Activated CD4-positive, alpha-beta T cell treated with anti-CD3 and anti-CD28 coated beads for 36 hours (primary cell): ENCODE measurements at regions of chr1 and their contacts with region 1.

Region 1: DNA sequence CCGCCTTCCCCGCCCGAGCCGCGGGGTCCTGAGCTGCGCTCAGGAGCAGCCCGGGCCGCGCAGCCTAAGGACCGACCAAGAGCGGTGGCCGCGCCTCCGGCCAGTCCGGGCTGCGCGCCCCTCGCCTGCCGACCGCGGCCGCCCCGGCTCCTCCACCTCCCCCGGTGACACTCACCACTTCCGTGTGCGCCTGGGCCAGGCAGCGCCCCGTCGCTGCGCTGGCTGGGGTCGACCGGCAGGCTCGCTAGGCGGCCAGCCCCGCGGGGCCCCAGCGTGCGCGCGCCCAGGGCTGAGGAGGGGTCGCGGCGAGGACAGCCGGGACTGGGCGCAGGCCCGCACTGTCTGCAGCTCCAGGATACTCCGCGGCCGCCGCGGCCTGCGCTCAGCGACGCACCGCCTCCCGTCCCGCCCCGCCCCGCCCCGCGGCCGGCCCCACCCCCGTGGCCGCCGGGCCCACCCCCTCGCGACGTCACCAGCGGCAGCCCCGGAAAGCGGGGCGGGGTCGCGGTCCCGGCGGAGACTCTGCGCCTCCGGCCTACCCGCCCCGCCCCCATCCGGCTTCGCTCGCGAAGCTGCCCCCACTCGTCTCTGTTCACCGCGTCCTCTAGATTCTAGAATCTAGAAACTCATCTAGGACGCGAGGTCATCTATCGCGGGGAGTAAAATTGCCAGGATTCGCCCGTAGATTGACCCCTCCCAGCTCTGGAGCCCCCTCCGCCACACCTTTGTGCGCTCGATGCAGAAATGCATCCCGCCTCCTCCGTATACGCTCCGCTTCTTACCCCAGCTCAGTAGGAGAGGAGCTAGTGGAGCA is at the start of gene JAK1:
- DNase-seq: peak; percentile 95
- ATAC-seq: peak; percentile 64
- H3K4me3 Mint-ChIP-seq: peak within 1 kb of the TSS; percentile 83
- H3K27ac Mint-ChIP-seq: peak within 1 kb of the TSS; percentile 90
- H3K4me1 Mint-ChIP-seq: peaks cover 50% of the 10 kb centered on the region
- H3K27me3 Mint-ChIP-seq: no peaks in the 10 kb centered on the region
- total RNA-seq, gene JAK1: 100 to 114 TPM

Region 2: GRCh38 chr1:64744492-64745180 is 221.7 kb before region 1 on chr1 and contains the start of gene RAVER2:
- CTCF ChIA-PET with region 1: no interaction called
- POLR2A ChIA-PET with region 1: no interaction called
- intact Hi-C with region 1: loop called in 1 of 2 experiments (anchors 10 kb)
- DNase-seq: peak; percentile 72
- ATAC-seq: peak; percentile 79
- H3K4me3 Mint-ChIP-seq: peak within 1 kb of the TSS; percentile 76
- H3K27ac Mint-ChIP-seq: peak within 1 kb of the TSS; percentile 70
- H3K4me1 Mint-ChIP-seq: peaks cover 17% of the 10 kb centered on the region
- H3K27me3 Mint-ChIP-seq: peaks cover 5% of the 10 kb centered on the region
- total RNA-seq, gene RAVER2: 3.2 to 3.6 TPM

Region 3: GRCh38 chr1:64948905-64949833 is 17.2 kb before region 1 on chr1:
- CTCF ChIA-PET with region 1: interaction called, 3 read pairs
- POLR2A ChIA-PET with region 1: interaction called, 4 read pairs
- intact Hi-C with region 1: loop called in 1 of 2 experiments (anchors 1 kb)
- DNase-seq: peak; percentile 71
- ATAC-seq: peak; percentile 87
- H3K4me3 Mint-ChIP-seq: peak overlapping the region; percentile 29
- H3K27ac Mint-ChIP-seq: peak overlapping the region; percentile 86
- H3K4me1 Mint-ChIP-seq: peaks cover 80% of the 10 kb centered on the region
- H3K27me3 Mint-ChIP-seq: no peaks in the 10 kb centered on the region

Region 4: DNA sequence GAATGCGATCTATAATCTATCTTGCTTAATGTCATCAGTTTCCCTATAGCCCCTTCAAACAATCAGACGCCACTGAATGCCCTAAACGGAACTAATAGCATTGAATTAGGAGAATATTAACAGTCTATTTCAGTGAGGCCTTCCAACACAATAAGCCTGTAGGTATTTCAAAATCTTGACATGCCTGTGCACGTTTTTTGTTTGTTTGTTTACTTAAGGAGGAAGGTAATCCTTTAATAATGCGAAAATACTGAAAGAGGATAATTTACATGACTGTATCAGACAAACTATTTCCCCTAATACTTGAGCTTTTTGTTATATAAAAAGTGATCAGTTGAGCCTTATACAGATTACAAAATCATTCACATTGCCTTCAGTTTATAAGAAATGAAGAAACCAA is 29.0 kb after region 1 on chr1:
- CTCF ChIA-PET with region 1: no interaction called
- POLR2A ChIA-PET with region 1: no interaction called
- intact Hi-C with region 1: no loop called
- DNase-seq: no peak
- ATAC-seq: no peak
- H3K4me3 Mint-ChIP-seq: no peak overlapping the region
- H3K27ac Mint-ChIP-seq: no peak overlapping the region
- H3K4me1 Mint-ChIP-seq: peaks cover 4% of the 10 kb centered on the region
- H3K27me3 Mint-ChIP-seq: no peaks in the 10 kb centered on the region

Region 5: GRCh38 chr1:65067491-65068201 is 101.3 kb after region 1 on chr1:
- CTCF ChIA-PET with region 1: interaction called, 5 read pairs
- POLR2A ChIA-PET with region 1: interaction called, 4 read pairs
- intact Hi-C with region 1: loop called (anchors 1 to 2 kb)
- DNase-seq: peak; percentile 70
- ATAC-seq: peak; percentile 27
- H3K4me3 Mint-ChIP-seq: peak overlapping the region; percentile 93
- H3K27ac Mint-ChIP-seq: peak overlapping the region; percentile 95
- H3K4me1 Mint-ChIP-seq: peaks cover 52% of the 10 kb centered on the region
- H3K27me3 Mint-ChIP-seq: no peaks in the 10 kb centered on the region

Region 6: DNA sequence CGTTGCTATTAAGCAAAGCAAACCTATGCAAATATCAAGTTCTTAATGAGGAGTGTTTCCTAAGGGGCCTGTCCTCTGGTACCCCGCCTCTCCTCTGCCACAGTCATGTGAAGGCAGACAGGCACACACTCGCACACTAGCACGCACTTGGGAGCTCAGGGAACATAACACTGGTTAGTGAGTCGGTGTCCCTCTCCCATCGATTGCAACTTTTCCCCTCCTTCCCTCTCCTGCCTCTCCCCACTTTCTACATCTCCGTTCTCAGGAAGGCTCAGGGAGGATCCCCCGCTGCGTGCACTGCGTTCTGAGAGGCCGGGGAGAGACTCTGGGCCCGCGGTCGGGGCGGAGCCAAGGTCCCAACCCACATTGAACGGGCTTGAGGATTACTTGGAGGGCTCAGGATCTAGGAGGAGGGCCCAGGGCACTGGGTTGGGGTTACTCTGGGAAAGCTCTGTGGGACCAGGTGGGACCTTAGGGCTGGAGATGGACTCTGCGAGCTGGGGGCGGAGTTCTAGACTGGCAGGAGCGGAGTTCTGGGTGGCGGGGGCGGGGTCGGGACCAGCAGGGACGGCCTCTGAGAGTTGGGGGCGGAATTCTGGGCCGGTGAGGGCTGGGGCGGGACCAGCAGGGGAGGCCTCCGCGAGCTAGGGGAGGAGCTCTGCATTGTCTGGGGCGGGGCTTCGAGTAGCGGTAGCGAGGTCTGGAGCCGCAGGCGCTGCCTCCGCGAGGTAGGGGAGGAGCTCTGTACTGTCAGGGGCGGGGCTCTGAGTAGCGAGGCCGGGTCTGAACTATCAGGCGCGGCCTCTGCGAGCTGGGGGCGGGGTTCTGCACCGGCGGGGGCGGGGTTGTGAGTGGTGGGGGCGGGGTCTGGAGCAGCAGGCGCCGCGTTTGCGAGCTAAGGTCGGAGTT is 453.6 kb after region 1 on chr1:
- CTCF ChIA-PET with region 1: no interaction called
- POLR2A ChIA-PET with region 1: no interaction called
- intact Hi-C with region 1: loop called in 1 of 2 experiments (anchors 1 kb)
- DNase-seq: peak; percentile 99
- ATAC-seq: peak; percentile 96
- H3K4me3 Mint-ChIP-seq: no peak overlapping the region
- H3K27ac Mint-ChIP-seq: peak overlapping the region; percentile 94
- H3K4me1 Mint-ChIP-seq: peaks cover 13% of the 10 kb centered on the region
- H3K27me3 Mint-ChIP-seq: no peaks in the 10 kb centered on the region

Region 7: GRCh38 chr1:66331657-66332547 is 1365.5 kb after region 1 on chr1:
- CTCF ChIA-PET with region 1: no interaction called
- POLR2A ChIA-PET with region 1: no interaction called
- intact Hi-C with region 1: loop called in 1 of 2 experiments (anchors 10 kb)
- DNase-seq: peak; percentile 75
- ATAC-seq: peak; percentile 40
- H3K4me3 Mint-ChIP-seq: peak overlapping the region; percentile 91
- H3K27ac Mint-ChIP-seq: peak overlapping the region; percentile 98
- H3K4me1 Mint-ChIP-seq: peaks cover 44% of the 10 kb centered on the region
- H3K27me3 Mint-ChIP-seq: no peaks in the 10 kb centered on the region